ENCODE measurements at regions of chr9 and their contacts with region 1.

Region 1: DNA sequence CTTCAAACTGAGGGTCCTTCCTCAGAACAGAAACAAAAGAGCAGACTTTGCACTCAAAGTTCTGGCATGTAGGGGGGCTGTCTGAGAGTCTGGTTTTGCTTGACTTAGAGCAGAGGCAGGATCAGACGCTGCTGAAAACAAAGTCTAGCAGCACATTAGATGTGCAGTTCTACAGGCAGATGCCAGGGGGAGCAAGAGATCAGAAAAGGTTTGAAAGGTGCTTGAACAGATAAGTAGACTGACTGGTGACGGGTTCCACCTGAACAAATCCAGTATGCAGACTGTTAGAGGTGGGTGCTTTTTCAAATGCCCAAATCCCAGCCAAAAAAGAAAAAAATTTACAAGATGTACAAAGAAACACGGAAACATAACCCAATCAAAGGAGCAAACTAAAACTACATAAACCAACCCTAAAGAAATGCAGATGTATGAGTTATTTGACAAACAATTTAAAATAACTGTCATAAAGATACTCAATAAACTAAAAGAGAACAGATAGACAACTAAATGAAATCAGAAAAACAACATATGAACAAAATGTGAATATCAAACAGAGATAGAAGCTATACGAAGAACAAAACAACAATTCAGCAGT is 194.7 kb upstream of the FREM1 start:
- DNase-seq: no peak

Region 2: DNA sequence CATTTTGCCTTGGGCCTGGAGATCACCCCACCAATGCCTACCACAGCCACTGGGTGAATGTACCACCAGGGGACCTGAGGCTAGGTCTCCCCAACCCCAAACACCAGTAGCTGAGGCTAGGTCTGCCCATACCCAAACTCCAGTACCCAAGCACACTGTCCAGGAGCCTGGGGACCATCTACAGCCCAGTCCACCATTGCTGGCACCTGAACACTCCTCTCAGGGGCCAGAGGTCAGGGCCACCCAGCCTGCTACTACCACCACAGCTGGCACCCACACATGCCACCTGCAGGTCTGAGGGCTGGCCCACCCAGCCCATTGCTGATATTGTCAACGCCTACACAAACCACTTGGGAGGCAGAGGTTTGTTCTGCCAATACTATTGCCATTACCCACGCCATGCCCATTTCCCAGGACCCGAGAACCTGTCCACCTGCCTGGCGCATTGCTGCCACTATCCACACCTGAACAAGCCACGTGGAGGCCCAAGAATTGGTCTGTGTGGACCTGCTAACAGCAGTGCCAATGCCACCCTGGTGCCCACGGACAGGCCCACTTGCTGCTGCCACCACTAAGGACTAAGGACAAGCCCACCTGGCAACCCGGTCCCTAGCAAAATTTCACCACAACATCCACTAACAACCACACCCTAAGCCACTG is 470.9 kb before region 1 on chr9:
- intact Hi-C with region 1: no loop called
- DNase-seq: no peak

Region 3: DNA sequence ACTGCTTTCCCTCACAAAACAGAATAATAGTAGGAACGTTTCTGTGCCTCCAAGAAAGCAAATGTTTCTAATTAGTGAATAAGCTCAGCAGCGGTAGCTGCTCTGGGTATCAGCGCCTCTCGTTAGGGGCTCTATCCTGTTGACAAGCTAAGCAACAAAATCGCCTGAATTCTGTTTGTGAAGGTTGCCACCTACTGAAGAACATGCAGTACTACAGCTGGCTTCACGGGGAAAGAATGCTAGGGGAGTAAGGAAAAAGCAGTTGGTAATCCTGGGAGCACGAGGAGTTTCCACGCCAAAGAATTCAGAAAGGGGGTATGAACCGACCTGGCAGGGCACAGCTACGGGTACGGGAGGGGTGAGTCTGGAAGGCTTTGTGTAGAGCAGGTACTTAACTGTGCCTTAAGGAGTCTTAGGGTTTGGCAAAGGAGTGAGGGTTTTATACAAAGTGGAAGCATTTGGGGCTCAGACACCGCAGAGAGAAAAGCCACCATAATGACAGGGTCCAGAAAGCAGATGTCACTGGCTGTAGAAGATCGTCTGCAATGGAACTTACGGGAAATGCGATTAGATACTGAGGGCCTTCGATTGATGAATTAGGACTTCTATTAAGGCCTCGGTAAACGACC is 30.4 kb after region 1 on chr9:
- intact Hi-C with region 1: loop called (anchors 1 kb)
- DNase-seq: no peak